ENCODE measurements at regions of chr4 and their contacts with region 1.

Region 1: GRCh38 chr4:24846716-24847115 is 51.3 kb downstream of the SOD3 start:
- DNase-seq: no peak
- ATAC-seq: no peak
- H3K4me3 ChIP-seq: no peak overlapping the region
- H3K27ac ChIP-seq: no peak overlapping the region
- H3K4me1 ChIP-seq: peaks cover 0 to 6% (median 0%) of the 10 kb centered on the region in 12 donors
- H3K27me3 ChIP-seq: no peaks in the 10 kb centered on the region
- CTCF ChIP-seq: no peak
- POLR2A ChIP-seq: no peak

Region 2: GRCh38 chr4:24871210-24871609 is 24.5 kb after region 1 on chr4:
- intact Hi-C with region 1: loop called in 1 of 10 experiments (anchors 1 kb)
- DNase-seq: no peak
- ATAC-seq: no peak
- H3K4me3 ChIP-seq: no peak overlapping the region
- H3K27ac ChIP-seq: no peak overlapping the region
- H3K4me1 ChIP-seq: no peaks in the 10 kb centered on the region
- H3K27me3 ChIP-seq: no peaks in the 10 kb centered on the region
- CTCF ChIP-seq: no peak
- POLR2A ChIP-seq: no peak